ENCODE measurements at regions of chr12 and their contacts with region 1.

Region 1: DNA sequence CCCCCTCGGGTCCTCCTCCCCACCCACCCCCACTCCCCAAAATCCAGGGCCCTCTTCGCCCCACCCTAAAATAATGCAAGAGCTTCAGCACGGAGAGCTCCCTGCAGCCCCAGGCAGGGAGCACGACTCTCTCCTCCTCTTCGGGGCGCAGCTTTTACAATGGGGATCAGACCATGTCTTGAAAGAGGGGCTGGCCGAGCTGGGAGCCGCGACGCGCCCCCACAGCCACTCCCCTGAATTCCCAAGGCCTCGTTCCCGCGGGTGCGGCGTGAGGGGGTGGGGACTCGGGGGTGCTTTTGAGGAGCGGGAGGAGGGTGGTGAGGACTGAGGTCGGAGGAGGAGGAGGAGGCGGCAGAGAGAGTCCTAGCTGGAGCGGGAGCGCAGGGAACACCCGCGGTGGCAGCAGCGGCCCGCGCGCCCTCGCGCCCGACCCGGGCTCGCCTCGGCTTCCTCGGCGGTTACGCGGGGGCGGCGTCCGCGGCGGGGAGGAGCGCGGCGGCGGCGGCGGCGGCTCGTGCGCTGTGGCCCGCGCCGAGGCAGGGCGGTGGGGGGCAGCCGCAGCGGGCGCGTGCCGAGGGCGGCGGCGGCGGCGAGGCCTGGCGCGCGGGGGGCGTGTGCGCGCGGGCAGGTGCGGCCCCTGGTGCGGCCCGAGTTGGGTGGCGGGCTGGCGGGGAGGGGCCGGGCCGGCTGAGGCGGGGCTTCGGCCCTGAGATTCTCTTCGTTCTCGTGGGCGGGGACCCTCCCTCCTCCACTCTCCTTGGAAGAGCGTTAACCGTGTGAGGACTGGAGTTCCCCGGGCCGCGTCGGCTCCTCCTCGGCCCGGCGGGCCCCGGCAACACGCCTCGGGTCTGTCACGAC is at the start of gene ANKS1B:
- DNase-seq: peak; percentile 49
- H3K4me3 ChIP-seq: peak within 1 kb of the TSS; percentile 49 to 51
- H3K27ac ChIP-seq: peak within 1 kb of the TSS; percentile 60 to 70
- H3K4me1 ChIP-seq: no peaks in the 10 kb centered on the region
- H3K27me3 ChIP-seq: no peaks in the 10 kb centered on the region
- CTCF ChIP-seq: no peak
- POLR2A ChIP-seq: no peak
- total RNA-seq, gene ANKS1B: 13.0 to 17.4 TPM

Region 2: GRCh38 chr12:99386907-99387306 is 597.6 kb before region 1 on chr12:
- intact Hi-C with region 1: no loop called
- DNase-seq: no peak
- H3K4me3 ChIP-seq: no peak overlapping the region
- H3K27ac ChIP-seq: no peak overlapping the region
- H3K4me1 ChIP-seq: no peaks in the 10 kb centered on the region
- H3K27me3 ChIP-seq: no peaks in the 10 kb centered on the region
- CTCF ChIP-seq: no peak
- POLR2A ChIP-seq: no peak

Region 3: GRCh38 chr12:99907210-99907609 is 77.3 kb before region 1 on chr12:
- intact Hi-C with region 1: loop called (anchors 5 kb)
- DNase-seq: no peak
- H3K4me3 ChIP-seq: no peak overlapping the region
- H3K27ac ChIP-seq: no peak overlapping the region
- H3K4me1 ChIP-seq: no peaks in the 10 kb centered on the region
- H3K27me3 ChIP-seq: no peaks in the 10 kb centered on the region
- CTCF ChIP-seq: no peak
- POLR2A ChIP-seq: no peak

Measured in prostate gland (tissue), 2 donors.